ENCODE measurements at regions of chr2 and their contacts with region 1.

Region 1: DNA sequence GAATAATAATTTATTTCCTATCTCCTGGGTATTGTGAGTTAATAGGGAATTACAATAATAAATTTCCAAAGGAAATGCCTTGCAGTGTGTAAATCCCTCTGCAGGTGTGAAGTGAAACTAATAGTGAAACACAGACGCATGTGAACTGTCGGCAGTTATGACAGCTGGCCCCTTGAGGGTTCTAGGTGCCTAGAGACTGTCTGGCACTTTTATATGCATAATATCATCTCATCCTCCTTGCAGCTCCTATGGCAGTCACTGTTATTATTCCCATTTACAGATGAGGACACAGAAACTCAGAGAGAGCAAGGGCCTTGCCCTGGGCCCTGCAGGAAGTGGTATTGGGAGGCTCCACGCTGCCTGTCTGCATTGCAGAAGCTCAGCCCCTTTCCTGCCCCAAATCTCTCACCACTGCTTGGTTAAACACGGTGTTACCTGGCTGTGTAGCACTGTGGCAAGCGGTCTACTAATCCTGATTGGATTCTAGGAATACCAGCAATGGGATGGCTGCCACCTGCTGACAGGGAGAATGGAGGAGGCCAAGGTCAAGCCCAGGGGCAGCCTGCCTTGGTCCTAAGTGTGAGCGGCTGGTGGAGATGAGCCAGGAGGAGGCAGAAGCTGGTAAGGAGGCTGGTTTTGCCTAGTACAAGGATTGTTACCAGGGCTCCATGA is 32.8 kb upstream of the ACKR3 start:
- DNase-seq: peak; percentile 68
- ATAC-seq: peak; percentile 76
- H3K4me3 Mint-ChIP-seq: peak overlapping the region; percentile 86
- H3K27ac Mint-ChIP-seq: peak overlapping the region; percentile 96
- H3K4me1 Mint-ChIP-seq: peaks cover 51% of the 10 kb centered on the region
- H3K27me3 Mint-ChIP-seq: no peaks in the 10 kb centered on the region

Region 2: DNA sequence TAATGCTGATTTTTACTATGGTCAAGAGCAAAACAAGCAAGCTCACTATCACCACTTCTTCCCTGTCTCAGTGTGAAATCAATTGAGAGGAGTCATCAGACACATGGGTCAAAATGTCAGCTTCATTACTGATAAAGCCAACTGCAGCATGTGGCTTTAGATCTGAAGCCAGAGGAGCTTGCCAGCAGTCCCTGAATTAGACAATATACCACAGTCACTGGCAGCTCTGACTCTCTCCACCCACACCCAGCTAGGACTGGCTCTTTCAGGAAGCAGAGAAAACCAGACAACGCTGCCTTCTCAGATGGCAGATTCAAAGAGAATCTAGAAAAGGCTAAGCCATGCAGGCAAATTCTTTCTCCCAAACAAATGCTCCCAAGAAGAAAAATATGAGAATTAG is 252.7 kb before region 1 on chr2:
- CTCF ChIA-PET with region 1: no interaction called
- POLR2A ChIA-PET with region 1: no interaction called
- intact Hi-C with region 1: no loop called
- DNase-seq: no peak
- ATAC-seq: no peak
- H3K4me3 Mint-ChIP-seq: no peak overlapping the region
- H3K27ac Mint-ChIP-seq: no peak overlapping the region
- H3K4me1 Mint-ChIP-seq: no peaks in the 10 kb centered on the region
- H3K27me3 Mint-ChIP-seq: peaks cover 26% of the 10 kb centered on the region

Region 3: DNA sequence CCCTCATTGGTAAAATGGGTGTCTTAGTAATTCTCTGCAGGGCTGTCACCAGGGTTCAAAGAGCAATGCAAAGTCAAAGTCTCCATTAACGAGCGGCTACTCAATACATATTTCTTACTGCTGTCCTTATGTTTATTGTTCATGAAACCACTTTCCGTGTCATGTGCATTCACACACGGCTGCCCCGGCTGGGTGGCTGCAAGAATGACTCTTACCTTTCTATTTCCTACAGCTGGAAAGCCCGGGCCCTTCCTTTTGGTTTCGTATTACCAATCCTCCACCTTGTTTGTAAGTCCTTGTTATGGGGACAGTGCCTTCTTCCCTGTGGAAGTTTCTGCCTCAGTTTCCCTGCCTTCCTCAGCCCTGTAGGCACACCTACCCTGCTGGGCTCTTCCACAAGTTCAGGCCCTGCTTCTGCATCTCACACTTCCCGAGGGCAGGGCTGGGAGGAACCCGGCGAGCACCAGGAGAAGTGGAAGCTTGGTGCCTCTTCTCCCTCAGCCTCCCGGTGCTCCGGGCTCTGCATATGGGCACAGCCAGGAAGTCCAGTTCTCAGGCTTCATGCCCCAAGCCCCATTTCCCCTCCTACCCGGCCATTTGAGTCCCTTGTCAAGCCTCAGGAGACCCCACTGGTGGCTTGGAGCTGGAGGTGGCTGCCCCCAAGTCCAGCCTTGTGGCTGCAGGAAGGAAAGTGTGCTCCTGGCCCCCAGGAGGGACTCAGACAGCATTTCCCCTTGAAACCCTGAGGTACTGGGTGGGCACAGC is 14.0 kb after region 1 on chr2:
- CTCF ChIA-PET with region 1: interaction called, 15 read pairs
- POLR2A ChIA-PET with region 1: no interaction called
- intact Hi-C with region 1: no loop called
- DNase-seq: peak; percentile 69
- ATAC-seq: peak; percentile 17
- H3K4me3 Mint-ChIP-seq: no peak overlapping the region
- H3K27ac Mint-ChIP-seq: no peak overlapping the region
- H3K4me1 Mint-ChIP-seq: peaks cover 97% of the 10 kb centered on the region
- H3K27me3 Mint-ChIP-seq: no peaks in the 10 kb centered on the region